Activated CD4-positive, alpha-beta memory T cell treated with anti-CD3 and anti-CD28 coated beads, Interleukin-2, amount 10 ng/mL, durations not matched to agents 7 days and 5 days (primary cell): ENCODE measurements at regions of chr10 and their contacts with region 1.

Region 1: GRCh38 chr10:49518982-49519578 is 19.8 kb downstream of the ERCC6 start:
- DNase-seq: peak; percentile 33
- H3K4me3 Mint-ChIP-seq: no peak overlapping the region
- H3K27ac Mint-ChIP-seq: no peak overlapping the region
- H3K4me1 Mint-ChIP-seq: peaks cover 3% of the 10 kb centered on the region
- H3K27me3 Mint-ChIP-seq: no peaks in the 10 kb centered on the region

Region 2: GRCh38 chr10:49407552-49408137 is 111.4 kb before region 1 on chr10:
- CTCF ChIA-PET with region 1: interaction called, 304 read pairs
- POLR2A ChIA-PET with region 1: no interaction called
- DNase-seq: peak; percentile 79
- H3K4me3 Mint-ChIP-seq: no peak overlapping the region
- H3K27ac Mint-ChIP-seq: no peak overlapping the region
- H3K4me1 Mint-ChIP-seq: no peaks in the 10 kb centered on the region
- H3K27me3 Mint-ChIP-seq: peaks cover 26% of the 10 kb centered on the region